ENCODE measurements at regions of chr1 and their contacts with region 1.

Region 1: DNA sequence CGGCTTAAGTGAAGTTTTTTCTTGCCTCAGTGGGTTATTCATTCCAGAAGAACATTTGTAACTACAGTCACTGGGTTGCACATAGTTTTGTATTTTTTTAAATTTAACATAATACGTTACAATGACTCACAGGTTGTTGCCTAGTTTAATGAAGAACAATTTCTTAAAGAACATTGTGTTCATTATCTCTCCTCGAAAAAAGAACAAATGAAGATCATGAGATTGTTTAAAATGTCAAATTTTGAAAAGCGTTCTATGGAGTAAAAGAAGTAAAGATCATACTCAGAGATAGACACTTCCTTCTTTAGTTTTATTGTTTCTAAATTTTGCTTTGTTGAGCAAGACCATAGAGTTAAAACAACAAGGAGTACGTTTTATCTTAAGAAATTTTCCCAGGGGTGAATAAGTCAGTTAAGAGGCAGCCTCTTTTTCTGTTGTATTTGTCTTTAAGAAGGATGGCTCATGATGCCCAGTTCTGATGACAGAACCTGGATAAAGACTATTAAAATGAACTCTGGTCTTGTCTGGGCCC is 10.5 kb upstream of the SLAMF1 start:
- DNase-seq: peak in 1 of 3 donors; percentile 32
- H3K4me3 ChIP-seq: peak overlapping the region in 1 of 3 experiments; percentile 46
- H3K4me3 Mint-ChIP-seq: peak overlapping the region; percentile 49 to 64
- H3K27ac ChIP-seq: peak overlapping the region; percentile 51 to 63
- H3K27ac Mint-ChIP-seq: peak overlapping the region; percentile 27 to 87 (median 82)
- H3K4me1 ChIP-seq: peaks cover 26 to 31% of the 10 kb centered on the region in 2 donors
- H3K4me1 Mint-ChIP-seq: peaks cover 36% of the 10 kb centered on the region
- H3K27me3 ChIP-seq: no peaks in the 10 kb centered on the region
- H3K27me3 Mint-ChIP-seq: no peaks in the 10 kb centered on the region
- CTCF ChIP-seq: no peak

Region 2: DNA sequence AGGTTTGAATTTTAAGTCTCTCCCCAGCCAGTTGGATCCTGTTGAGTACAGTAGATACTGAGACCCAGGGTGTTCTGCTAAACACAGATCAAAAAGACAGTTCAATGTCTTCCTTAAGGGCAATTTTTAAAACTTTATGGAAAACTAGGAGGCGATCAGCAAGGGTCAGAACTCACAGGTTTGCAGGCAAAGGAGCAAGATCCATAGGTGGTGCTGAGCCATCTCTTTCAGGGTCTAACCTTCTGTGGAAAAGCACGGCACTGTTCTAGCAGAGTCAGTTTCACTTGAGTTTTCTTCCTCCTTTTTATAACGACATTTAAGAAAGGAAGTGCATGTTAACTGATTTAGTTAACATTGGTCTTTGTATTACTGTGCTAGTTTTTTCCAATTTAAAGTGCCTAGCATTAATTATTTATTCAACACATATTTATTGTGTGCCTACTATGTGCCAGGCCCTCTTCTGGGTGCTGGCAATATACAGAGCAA is 78.1 kb before region 1 on chr1 and contains the start of gene CD84:
- intact Hi-C with region 1: no loop called
- DNase-seq: peak in 2 of 3 donors; percentile 29 to 61
- H3K4me3 ChIP-seq: peak within 1 kb of the TSS; percentile 59 to 96 (median 83)
- H3K4me3 Mint-ChIP-seq: peak within 1 kb of the TSS; percentile 82 to 98
- H3K27ac ChIP-seq: peak within 1 kb of the TSS; percentile 57 to 92
- H3K27ac Mint-ChIP-seq: peak within 1 kb of the TSS; percentile 85 to 97 (median 92)
- H3K4me1 ChIP-seq: peaks cover 57 to 62% of the 10 kb centered on the region in 2 donors
- H3K4me1 Mint-ChIP-seq: peaks cover 59% of the 10 kb centered on the region
- H3K27me3 ChIP-seq: no peaks in the 10 kb centered on the region
- H3K27me3 Mint-ChIP-seq: peaks cover 0 to 1% (median 0%) of the 10 kb centered on the region in 3 donors
- CTCF ChIP-seq: no peak
- polyA plus RNA-seq, gene CD84: 14.5 to 33.5 (median 31.8) TPM

Region 3: DNA sequence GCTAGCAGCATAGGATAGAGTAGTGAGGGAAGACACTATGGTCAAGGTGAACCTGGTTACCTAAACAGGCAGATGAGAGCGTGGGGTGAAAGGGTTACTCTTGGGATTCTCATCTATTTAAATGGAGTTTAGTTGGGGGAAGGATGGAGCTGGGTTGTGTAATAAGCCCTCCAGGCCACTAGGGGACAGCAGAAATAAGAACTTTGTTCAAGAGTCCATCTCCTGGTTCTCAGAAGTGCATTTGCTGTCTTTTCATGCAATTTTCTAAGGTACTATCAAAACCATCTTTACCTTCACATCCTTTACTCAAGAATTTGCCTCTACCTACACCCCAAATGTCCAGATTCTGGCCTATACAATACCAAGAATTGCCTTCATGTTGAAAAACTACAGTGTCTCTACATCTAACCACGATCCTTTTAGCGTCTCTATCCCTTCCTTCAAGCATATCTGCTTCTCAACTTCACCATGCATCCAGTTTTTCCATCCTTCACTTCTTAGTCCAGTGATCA is 38.5 kb before region 1 on chr1:
- intact Hi-C with region 1: loop called in 1 of 2 experiments (anchors 5 kb)
- DNase-seq: peak; percentile 18 to 40 (median 37)
- H3K4me3 ChIP-seq: no peak overlapping the region
- H3K4me3 Mint-ChIP-seq: no peak overlapping the region
- H3K27ac ChIP-seq: no peak overlapping the region
- H3K27ac Mint-ChIP-seq: no peak overlapping the region
- H3K4me1 ChIP-seq: peaks cover 9 to 12% of the 10 kb centered on the region in 2 donors
- H3K4me1 Mint-ChIP-seq: peaks cover 14% of the 10 kb centered on the region
- H3K27me3 ChIP-seq: no peaks in the 10 kb centered on the region
- H3K27me3 Mint-ChIP-seq: peaks cover 0 to 5% (median 2%) of the 10 kb centered on the region in 3 donors
- CTCF ChIP-seq: peak; percentile 87